Activated CD8-positive, alpha-beta T cell treated with anti-CD3 and anti-CD28 coated beads, Interleukin-2, amount 10 ng/mL, durations not matched to agents 7 days and 5 days (primary cell): ENCODE measurements at regions of chr6 and their contacts with region 1.

Region 1: DNA sequence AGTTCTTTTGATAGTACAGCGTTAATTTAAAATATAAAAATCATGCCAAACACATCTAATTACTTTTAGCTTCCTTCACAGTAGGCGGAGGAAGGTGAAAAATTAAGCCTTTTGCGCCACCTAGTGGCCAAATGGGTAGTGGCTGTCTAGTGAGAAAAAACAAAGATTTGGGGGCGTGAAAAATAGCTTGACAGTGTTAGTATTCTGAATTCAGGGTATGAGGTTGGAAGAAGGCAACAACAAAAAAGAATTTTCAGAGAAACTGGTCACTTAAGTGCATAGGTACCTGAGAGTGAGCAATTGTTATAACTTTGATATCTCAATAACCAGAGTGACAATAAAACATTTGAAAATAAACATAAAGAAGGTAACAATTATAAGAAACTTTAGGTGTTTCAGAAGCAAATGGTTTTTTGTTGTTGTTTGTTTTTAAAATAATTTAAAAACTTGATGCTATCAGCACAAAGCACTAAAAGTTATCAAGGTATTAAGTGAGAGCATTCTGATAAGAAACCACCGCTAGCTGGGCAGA is 14.3 kb downstream of the PSMB9 start:
- DNase-seq: peak; percentile 93
- ATAC-seq: peak; percentile 77
- H3K4me3 Mint-ChIP-seq: no peak overlapping the region
- H3K27ac Mint-ChIP-seq: no peak overlapping the region
- H3K4me1 Mint-ChIP-seq: peaks cover 35% of the 10 kb centered on the region
- H3K27me3 Mint-ChIP-seq: peaks cover 3% of the 10 kb centered on the region

Region 2: DNA sequence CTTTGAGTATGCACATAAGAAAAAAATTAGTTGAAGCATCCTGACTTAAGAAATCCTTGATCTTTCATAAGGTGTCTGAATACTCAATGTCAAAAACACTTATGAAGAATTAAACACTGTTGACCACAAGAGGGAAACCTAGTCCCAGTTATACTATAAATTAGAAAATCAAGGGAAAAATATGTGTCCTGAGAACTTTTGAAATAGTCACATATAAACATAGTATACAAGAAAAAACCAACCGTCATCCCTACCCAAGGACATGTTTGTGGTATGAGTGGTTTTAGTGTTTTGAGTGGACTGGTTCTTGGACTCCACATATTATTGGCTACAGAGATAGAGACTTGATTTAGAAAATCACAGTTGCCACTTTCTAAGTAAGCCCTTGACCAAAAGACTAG is 436.3 kb before region 1 on chr6:
- CTCF ChIA-PET with region 1: interaction called, 11 read pairs
- POLR2A ChIA-PET with region 1: no interaction called
- DNase-seq: no peak
- ATAC-seq: no peak
- H3K4me3 Mint-ChIP-seq: no peak overlapping the region
- H3K27ac Mint-ChIP-seq: no peak overlapping the region
- H3K4me1 Mint-ChIP-seq: no peaks in the 10 kb centered on the region
- H3K27me3 Mint-ChIP-seq: peaks cover 27% of the 10 kb centered on the region

Region 3: DNA sequence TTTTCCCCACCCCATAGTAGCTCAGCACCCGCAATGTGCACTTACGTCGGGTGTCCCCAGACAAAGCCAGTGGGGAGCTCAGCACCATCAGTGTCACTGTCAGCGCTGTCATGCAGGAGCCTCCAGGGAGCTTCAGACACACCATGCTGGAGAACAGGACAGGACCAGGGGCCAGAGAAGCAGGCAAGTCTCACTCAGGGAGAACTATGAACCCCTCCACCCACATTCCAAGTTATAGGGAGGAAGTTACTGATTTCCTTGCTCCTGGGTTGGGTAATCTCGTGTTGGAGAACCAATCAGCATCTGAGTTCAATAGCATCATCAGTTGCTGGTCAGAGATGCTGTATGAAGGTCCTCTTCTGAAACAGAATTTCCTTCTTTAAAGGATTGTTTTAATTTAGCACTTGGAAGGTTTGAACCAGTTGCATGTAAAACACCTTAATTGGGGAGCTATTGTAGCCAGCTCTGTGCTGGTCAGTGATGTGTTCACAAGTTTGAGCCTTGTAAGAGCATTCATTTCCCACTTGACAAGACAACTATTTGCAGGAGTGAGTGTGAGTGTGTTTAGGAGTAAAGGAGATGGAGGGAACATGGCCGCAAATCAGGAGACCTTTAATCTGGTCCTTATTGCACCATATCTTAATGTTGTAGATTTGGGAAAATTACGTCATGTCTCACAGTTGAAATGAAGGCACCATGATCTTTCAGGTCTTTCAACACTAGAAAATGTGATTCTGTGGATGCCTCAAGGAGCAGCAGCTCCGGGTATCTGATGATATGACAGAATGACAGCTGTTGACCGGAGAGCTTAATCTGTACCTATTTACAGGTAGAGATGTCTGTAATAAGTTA is 278.5 kb before region 1 on chr6 and contains the start of gene HLA-DRB1:
- CTCF ChIA-PET with region 1: no interaction called
- POLR2A ChIA-PET with region 1: no interaction called
- DNase-seq: peak; percentile 31
- ATAC-seq: peak; percentile 91
- H3K4me3 Mint-ChIP-seq: peak within 1 kb of the TSS; percentile 69
- H3K27ac Mint-ChIP-seq: peak within 1 kb of the TSS; percentile 75
- H3K4me1 Mint-ChIP-seq: peaks cover 17% of the 10 kb centered on the region
- H3K27me3 Mint-ChIP-seq: peaks cover 28% of the 10 kb centered on the region
- total RNA-seq, gene HLA-DRB1: 46.0 to 50.7 TPM

Region 4: GRCh38 chr6:32785781-32786533 is 82.4 kb before region 1 on chr6:
- CTCF ChIA-PET with region 1: interaction called, 36 read pairs
- POLR2A ChIA-PET with region 1: no interaction called
- DNase-seq: peak; percentile 54
- ATAC-seq: peak; percentile 93
- H3K4me3 Mint-ChIP-seq: no peak overlapping the region
- H3K27ac Mint-ChIP-seq: no peak overlapping the region
- H3K4me1 Mint-ChIP-seq: no peaks in the 10 kb centered on the region
- H3K27me3 Mint-ChIP-seq: peaks cover 52% of the 10 kb centered on the region

Region 5: DNA sequence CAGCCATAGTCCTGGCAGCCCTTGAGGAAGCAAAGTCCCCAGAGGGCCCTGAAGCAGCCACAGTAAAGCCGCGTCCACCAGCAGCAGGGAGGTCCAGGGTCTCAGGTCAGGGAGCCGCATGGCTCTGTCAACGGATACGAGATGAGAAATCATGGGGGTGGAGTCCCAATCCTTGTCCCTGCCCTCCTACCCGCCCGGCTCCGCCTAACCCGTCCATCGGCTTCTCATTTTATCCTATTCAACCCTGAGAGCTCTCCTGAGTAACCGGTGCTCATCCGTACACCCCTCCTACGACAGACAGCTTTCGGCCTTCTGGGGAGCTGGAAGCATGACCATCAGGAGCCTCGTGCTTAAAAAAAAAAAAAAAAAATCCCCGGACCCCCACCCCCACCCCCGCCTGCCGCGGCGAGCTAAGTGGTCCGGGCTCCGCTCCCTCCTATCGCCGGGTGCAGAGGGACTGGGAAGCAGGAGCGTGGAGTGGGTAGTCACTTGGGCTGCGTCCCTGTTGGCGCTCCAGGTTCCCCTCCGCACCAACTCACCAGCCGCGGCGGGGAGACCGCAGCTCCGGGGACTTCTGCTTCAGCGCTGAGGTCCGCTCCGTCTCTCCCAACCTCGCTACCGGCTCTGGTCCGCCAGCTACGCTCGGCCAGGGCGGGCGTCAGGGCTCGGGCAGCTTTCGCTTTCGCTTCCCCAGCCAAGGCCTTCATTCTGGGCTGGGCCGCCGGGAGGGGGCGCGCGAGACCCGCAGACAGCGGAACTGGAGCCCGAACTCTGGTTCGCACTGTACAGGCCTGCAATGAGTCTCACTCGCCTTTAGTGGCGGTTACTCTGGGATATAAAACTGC is 30.0 kb before region 1 on chr6 and contains the start of gene TAP2:
- CTCF ChIA-PET with region 1: interaction called, 512 read pairs
- POLR2A ChIA-PET with region 1: interaction called, 240 read pairs
- DNase-seq: peak; percentile 98
- ATAC-seq: peak; percentile 85
- H3K4me3 Mint-ChIP-seq: peak within 1 kb of the TSS; percentile 82
- H3K27ac Mint-ChIP-seq: peak within 1 kb of the TSS; percentile 99
- H3K4me1 Mint-ChIP-seq: peaks cover 80% of the 10 kb centered on the region
- H3K27me3 Mint-ChIP-seq: no peaks in the 10 kb centered on the region
- total RNA-seq, gene TAP2: 145 to 159 TPM

Region 6: GRCh38 chr6:32894080-32895005 is 26.0 kb after region 1 on chr6:
- CTCF ChIA-PET with region 1: interaction called, 17 read pairs
- POLR2A ChIA-PET with region 1: no interaction called
- DNase-seq: peak; percentile 94
- ATAC-seq: peak; percentile 99
- H3K4me3 Mint-ChIP-seq: peak overlapping the region; percentile 98
- H3K27ac Mint-ChIP-seq: peak overlapping the region; percentile 94
- H3K4me1 Mint-ChIP-seq: peaks cover 37% of the 10 kb centered on the region
- H3K27me3 Mint-ChIP-seq: peaks cover 10% of the 10 kb centered on the region

Region 7: DNA sequence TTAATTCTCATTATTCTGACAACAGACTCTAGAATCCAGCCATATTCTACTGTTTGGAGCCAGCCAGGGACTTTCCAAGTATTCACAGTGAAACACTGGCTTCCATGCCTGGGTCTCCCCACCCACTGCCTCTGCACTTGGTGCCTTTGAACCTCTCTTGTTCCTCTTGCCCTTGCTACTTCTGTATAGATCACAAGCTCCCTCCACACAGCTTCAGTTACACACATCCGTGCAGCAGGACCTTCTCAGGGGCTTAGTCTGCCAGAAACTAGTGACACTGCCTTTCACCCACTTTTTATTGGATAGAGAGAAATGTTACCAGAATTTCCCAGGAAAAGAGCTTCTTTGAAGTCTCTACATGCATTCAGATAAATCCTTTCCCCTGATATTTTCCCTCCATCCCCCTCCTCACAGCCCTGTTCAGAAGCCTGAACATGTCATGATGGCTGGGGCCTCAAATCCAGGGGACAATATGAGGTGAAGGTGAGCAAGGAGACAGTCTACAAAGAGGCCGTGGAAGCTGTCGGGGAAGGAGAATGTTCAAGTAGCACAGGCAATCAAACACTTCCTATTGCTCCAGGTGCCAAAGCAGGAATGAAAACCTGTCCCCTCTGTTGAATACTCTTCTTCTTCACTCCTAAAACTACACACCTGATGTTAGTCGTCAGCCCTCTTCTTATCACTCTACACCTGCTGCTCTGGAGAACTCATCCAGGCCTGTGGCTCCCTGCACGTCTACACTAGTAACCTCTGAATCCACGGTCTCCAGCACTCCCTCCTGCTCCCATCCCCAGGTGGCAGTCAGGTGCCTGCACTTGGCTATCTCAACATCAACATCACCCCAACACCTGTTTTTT is 161.2 kb after region 1 on chr6:
- CTCF ChIA-PET with region 1: no interaction called
- POLR2A ChIA-PET with region 1: no interaction called
- DNase-seq: no peak
- ATAC-seq: peak; percentile 64
- H3K4me3 Mint-ChIP-seq: no peak overlapping the region
- H3K27ac Mint-ChIP-seq: peak overlapping the region; percentile 3
- H3K4me1 Mint-ChIP-seq: peaks cover 17% of the 10 kb centered on the region
- H3K27me3 Mint-ChIP-seq: peaks cover 24% of the 10 kb centered on the region

Region 8: GRCh38 chr6:33904050-33904746 is 1035.9 kb after region 1 on chr6:
- CTCF ChIA-PET with region 1: no interaction called
- POLR2A ChIA-PET with region 1: no interaction called
- DNase-seq: peak; percentile 97
- ATAC-seq: peak; percentile 90
- H3K4me3 Mint-ChIP-seq: peak overlapping the region; percentile 77
- H3K27ac Mint-ChIP-seq: peak overlapping the region; percentile 93
- H3K4me1 Mint-ChIP-seq: peaks cover 84% of the 10 kb centered on the region
- H3K27me3 Mint-ChIP-seq: no peaks in the 10 kb centered on the region